Sigmoid colon (tissue), 7 donors: ENCODE measurements at regions of chr1 and their contacts with region 1.

Region 1: GRCh38 chr1:3069491-3070303 is 694 bp downstream of the PRDM16 start:
- DNase-seq: peak; percentile 64
- H3K4me3 ChIP-seq: peak overlapping the region; percentile 53 to 95 (median 72)
- H3K27ac ChIP-seq: peak overlapping the region; percentile 54 to 71 (median 62)
- H3K4me1 ChIP-seq: peaks cover 0 to 52% (median 50%) of the 10 kb centered on the region in 4 donors
- H3K27me3 ChIP-seq: peaks cover 71 to 93% (median 87%) of the 10 kb centered on the region in 3 donors
- CTCF ChIP-seq: peak in 1 of 4 experiments; percentile 25
- EP300 ChIP-seq: no peak
- POLR2A ChIP-seq: no peak

Region 2: DNA sequence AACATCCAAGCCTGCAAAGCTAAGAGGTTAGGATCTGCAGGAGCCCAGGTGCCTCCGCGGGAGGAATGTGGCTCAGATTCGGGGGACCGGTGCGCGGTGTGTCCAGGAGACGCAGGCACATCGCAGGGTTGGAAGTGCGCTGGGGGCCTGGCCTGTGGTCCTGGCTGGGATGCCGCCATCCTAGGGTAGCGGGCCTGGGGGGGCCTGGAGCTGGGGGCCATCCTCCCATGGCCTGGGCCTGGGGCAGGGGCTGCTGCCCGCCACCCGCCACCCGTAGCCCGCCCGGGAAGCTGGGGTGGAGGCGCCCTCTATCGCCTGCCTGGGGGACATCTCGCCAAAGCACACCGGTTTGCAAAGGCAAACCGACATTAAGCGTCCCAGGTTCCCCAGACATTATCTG is 214.2 kb after region 1 on chr1:
- intact Hi-C with region 1: loop called (anchors 5 kb)
- DNase-seq: no peak
- H3K4me3 ChIP-seq: no peak overlapping the region
- H3K27ac ChIP-seq: no peak overlapping the region
- H3K4me1 ChIP-seq: peaks cover 0 to 7% (median 3%) of the 10 kb centered on the region in 4 donors
- H3K27me3 ChIP-seq: peaks cover 9 to 72% (median 43%) of the 10 kb centered on the region in 3 donors
- CTCF ChIP-seq: peak; percentile 31 to 77 (median 67)
- EP300 ChIP-seq: no peak
- POLR2A ChIP-seq: no peak

Region 3: DNA sequence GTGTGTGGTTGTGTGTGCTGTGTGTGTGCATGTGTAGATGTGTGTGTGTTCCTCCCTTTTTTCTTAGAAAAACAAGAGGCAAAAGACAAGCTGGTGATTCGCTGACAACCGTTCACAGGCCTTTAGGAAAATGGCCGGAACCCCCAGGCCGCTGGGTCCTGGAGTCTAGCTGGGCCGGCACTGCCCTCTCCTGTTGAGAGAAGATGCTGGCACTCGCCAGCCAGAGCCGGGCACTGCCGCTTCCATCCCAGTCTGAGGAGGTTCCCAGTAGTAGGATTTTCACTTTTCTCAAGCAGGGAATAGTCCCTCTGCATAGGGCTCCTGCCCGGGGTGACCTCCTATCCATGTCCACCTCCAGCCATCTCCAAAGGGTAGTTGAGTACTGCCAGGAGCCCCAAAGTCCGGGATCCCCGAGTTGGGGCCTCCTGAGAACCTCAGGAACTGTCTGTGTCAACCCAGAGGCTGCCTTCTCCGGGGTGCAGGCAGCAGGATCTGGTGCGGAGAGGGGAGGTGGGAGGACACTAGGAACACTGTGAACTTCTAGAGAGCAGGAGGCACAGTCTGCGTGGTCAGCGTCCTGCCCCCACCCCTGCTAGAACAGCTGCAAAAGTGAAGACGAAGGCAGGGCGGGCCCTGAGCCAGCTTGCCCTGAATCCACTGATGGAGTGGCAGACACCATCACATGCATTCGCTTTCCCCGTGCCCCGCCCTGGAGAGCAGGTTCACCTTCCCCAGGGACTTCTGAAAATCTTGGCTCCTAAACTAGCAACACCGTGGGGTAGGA is 340.6 kb after region 1 on chr1:
- intact Hi-C with region 1: loop called (anchors 5 kb)
- DNase-seq: no peak
- H3K4me3 ChIP-seq: no peak overlapping the region
- H3K27ac ChIP-seq: no peak overlapping the region
- H3K4me1 ChIP-seq: no peaks in the 10 kb centered on the region
- H3K27me3 ChIP-seq: peaks cover 3 to 86% (median 60%) of the 10 kb centered on the region in 3 donors
- CTCF ChIP-seq: peak; percentile 27 to 71 (median 62)
- EP300 ChIP-seq: no peak
- POLR2A ChIP-seq: no peak